ENCODE measurements at regions of chr6 and their contacts with region 1.

Region 1: DNA sequence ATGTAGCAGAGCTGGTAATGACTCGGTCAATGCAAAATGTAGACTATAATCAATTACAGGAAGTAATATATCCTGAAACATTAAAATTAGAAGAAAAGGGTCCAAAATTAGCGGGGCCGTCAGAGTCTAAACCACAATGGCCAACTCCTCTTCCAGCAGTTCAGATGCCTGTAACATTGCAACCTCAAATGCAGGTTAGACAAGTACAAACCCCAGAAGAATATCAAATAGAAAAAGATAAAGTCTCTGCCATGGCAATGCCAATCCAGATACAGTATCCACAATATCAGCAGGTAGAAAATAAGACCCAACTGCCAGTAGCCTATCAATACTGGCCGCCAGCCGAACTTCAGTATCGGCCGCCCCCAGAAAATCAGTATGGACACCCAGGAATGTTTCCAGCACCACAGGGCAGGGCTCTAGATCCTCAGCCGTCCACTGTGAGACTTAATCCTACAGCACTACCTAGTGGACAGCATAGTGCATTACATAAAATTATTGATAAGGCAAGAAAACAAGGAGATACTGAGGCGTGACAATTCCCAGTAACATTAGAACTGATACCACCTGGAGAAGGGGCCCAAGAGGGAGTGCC is 158.4 kb downstream of the GPX5 start:
- DNase-seq: peak; percentile 48 to 62
- H3K4me3 ChIP-seq: no peak overlapping the region
- H3K4me1 ChIP-seq: no peaks in the 10 kb centered on the region; the same call in 1 of the 2 replicates
- H3K27me3 ChIP-seq: peaks cover 3% of the 10 kb centered on the region; the same call in 1 of the 2 replicates

Region 2: GRCh38 chr6:29016559-29017427 is 332.8 kb after region 1 on chr6:
- in situ Hi-C with region 1: loop called (anchors 10 kb)
- DNase-seq: peak; percentile 66 to 88
- H3K4me3 ChIP-seq: peak overlapping the region; percentile 35
- H3K4me1 ChIP-seq: no peaks in the 10 kb centered on the region; the same call in 1 of the 2 replicates
- H3K27me3 ChIP-seq: no peaks in the 10 kb centered on the region